CD14-positive monocyte (primary cell): ENCODE measurements at regions of chr21 and their contacts with region 1.

Region 1: DNA sequence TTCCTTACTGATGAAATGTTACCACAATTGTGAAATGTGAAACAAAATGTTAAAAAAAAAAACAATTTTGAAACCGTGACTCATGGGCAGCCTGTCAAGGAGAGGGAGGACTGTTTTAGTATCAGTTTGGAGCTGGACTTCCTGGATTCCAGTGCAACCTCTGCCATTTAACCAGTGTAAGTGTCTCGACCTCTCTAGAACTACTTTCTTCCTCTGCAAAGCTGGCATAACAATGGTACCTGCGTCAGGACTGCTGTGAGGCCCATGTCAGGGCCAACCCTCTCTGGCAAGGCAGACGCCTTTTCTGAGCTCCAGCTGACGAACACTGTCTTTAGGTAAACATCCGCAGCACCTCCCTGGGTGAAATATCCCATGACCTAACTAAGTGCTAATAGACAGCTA is 20.9 kb downstream of the URB1 start:
- DNase-seq: peak; percentile 68 to 86 (median 82)
- H3K4me3 ChIP-seq: peak overlapping the region; percentile 2 to 50 (median 8)
- H3K4me3 Mint-ChIP-seq: peak overlapping the region; percentile 73 to 86
- H3K27ac ChIP-seq: peak overlapping the region; percentile 84 to 92
- H3K27ac Mint-ChIP-seq: peak overlapping the region; percentile 93 to 99 (median 96)
- H3K4me1 ChIP-seq: peaks cover 11 to 19% of the 10 kb centered on the region in 2 donors
- H3K4me1 Mint-ChIP-seq: peaks cover 16% of the 10 kb centered on the region
- H3K27me3 ChIP-seq: no peaks in the 10 kb centered on the region
- H3K27me3 Mint-ChIP-seq: no peaks in the 10 kb centered on the region
- CTCF ChIP-seq: no peak

Region 2: GRCh38 chr21:32278518-32279376 is 93.2 kb before region 1 on chr21 and contains the start of gene MIS18A:
- intact Hi-C with region 1: loop called in 1 of 2 experiments (anchors 5 kb)
- DNase-seq: peak; percentile 94 to 99 (median 98)
- H3K4me3 ChIP-seq: peak within 1 kb of the TSS; percentile 74 to 94 (median 82)
- H3K4me3 Mint-ChIP-seq: peak within 1 kb of the TSS; percentile 98 to 99
- H3K27ac ChIP-seq: peak within 1 kb of the TSS; percentile 29 to 85
- H3K27ac Mint-ChIP-seq: peak within 1 kb of the TSS; percentile 85 to 95 (median 94)
- H3K4me1 ChIP-seq: peaks cover 16 to 21% of the 10 kb centered on the region in 2 donors
- H3K4me1 Mint-ChIP-seq: peaks cover 23% of the 10 kb centered on the region
- H3K27me3 ChIP-seq: no peaks in the 10 kb centered on the region
- H3K27me3 Mint-ChIP-seq: peaks cover 0 to 1% (median 0%) of the 10 kb centered on the region in 3 donors
- CTCF ChIP-seq: no peak
- polyA plus RNA-seq, gene MIS18A: 1.6 to 2.5 (median 2.3) TPM